ENCODE measurements at regions of chr11 and their contacts with region 1.

Region 1: GRCh38 chr11:27139742-27140367 is 99.2 kb downstream of the BBOX1 start:
- DNase-seq: peak in 1 of 2 donors; percentile 63
- H3K4me3 ChIP-seq: no peak overlapping the region
- H3K27ac ChIP-seq: no peak overlapping the region
- H3K4me1 ChIP-seq: no peaks in the 10 kb centered on the region
- H3K27me3 ChIP-seq: no peaks in the 10 kb centered on the region
- CTCF ChIP-seq: no peak
- EP300 ChIP-seq: no peak
- POLR2A ChIP-seq: no peak

Region 2: GRCh38 chr11:26761361-26761809 is 378.5 kb before region 1 on chr11:
- intact Hi-C with region 1: loop called (anchors 10 kb)
- DNase-seq: no peak
- H3K4me3 ChIP-seq: no peak overlapping the region
- H3K27ac ChIP-seq: no peak overlapping the region
- H3K4me1 ChIP-seq: no peaks in the 10 kb centered on the region
- H3K27me3 ChIP-seq: no peaks in the 10 kb centered on the region
- CTCF ChIP-seq: no peak
- EP300 ChIP-seq: no peak
- POLR2A ChIP-seq: no peak